ENCODE measurements at regions of chr12 and their contacts with region 1.

Region 1: GRCh38 chr12:9707864-9708808 is 24.8 kb downstream of the CLECL1 start:
- DNase-seq: peak; percentile 34
- H3K4me3 ChIP-seq: no peak overlapping the region
- H3K27ac ChIP-seq: no peak overlapping the region
- H3K4me1 ChIP-seq: no peaks in the 10 kb centered on the region
- H3K27me3 ChIP-seq: no peaks in the 10 kb centered on the region
- CTCF ChIP-seq: peak; percentile 84

Region 2: GRCh38 chr12:9634177-9634803 is 73.8 kb before region 1 on chr12:
- intact Hi-C with region 1: loop called (anchors 5 kb)
- DNase-seq: no peak
- H3K4me3 ChIP-seq: no peak overlapping the region
- H3K27ac ChIP-seq: no peak overlapping the region
- H3K4me1 ChIP-seq: no peaks in the 10 kb centered on the region
- H3K27me3 ChIP-seq: no peaks in the 10 kb centered on the region
- CTCF ChIP-seq: peak; percentile 75

Region 3: GRCh38 chr12:9763025-9763424 is 54.9 kb after region 1 on chr12:
- intact Hi-C with region 1: no loop called
- DNase-seq: no peak
- H3K4me3 ChIP-seq: no peak overlapping the region
- H3K27ac ChIP-seq: no peak overlapping the region
- H3K4me1 ChIP-seq: no peaks in the 10 kb centered on the region
- H3K27me3 ChIP-seq: no peaks in the 10 kb centered on the region
- CTCF ChIP-seq: no peak

Region 4: GRCh38 chr12:9883175-9883574 is 175.0 kb after region 1 on chr12:
- intact Hi-C with region 1: no loop called
- DNase-seq: no peak
- H3K4me3 ChIP-seq: no peak overlapping the region
- H3K27ac ChIP-seq: no peak overlapping the region
- H3K4me1 ChIP-seq: no peaks in the 10 kb centered on the region
- H3K27me3 ChIP-seq: no peaks in the 10 kb centered on the region
- CTCF ChIP-seq: no peak